Activated CD8-positive, alpha-beta T cell treated with anti-CD3 and anti-CD28 coated beads for 36 hours (primary cell): ENCODE measurements at regions of chr6 and their contacts with region 1.

Region 1: DNA sequence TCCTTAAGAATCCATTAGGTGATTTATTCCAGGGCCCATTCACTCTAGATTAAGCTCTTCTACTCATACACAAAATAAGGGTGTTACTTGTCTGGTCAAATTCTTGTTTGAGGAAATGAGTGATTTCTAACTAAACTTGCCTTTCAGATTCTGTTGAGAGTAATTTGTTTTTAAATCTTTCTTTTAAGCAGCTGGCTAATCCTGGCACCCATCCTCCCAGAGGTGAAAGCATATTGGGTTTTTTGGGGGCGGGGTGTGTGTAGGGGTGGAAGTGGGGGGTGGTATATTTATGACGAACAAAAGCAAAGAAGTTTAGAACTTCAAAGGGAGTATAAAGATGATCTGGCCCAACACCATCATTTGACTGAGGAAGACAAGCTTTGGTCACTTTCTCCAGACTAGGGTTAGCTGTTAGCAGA is 94.7 kb downstream of the RTN4IP1 start:
- DNase-seq: peak; percentile 77
- ATAC-seq: peak; percentile 84
- H3K4me3 Mint-ChIP-seq: no peak overlapping the region
- H3K27ac Mint-ChIP-seq: peak overlapping the region; percentile 84
- H3K4me1 Mint-ChIP-seq: peaks cover 78% of the 10 kb centered on the region
- H3K27me3 Mint-ChIP-seq: no peaks in the 10 kb centered on the region
- CTCF ChIP-seq: no peak

Region 2: DNA sequence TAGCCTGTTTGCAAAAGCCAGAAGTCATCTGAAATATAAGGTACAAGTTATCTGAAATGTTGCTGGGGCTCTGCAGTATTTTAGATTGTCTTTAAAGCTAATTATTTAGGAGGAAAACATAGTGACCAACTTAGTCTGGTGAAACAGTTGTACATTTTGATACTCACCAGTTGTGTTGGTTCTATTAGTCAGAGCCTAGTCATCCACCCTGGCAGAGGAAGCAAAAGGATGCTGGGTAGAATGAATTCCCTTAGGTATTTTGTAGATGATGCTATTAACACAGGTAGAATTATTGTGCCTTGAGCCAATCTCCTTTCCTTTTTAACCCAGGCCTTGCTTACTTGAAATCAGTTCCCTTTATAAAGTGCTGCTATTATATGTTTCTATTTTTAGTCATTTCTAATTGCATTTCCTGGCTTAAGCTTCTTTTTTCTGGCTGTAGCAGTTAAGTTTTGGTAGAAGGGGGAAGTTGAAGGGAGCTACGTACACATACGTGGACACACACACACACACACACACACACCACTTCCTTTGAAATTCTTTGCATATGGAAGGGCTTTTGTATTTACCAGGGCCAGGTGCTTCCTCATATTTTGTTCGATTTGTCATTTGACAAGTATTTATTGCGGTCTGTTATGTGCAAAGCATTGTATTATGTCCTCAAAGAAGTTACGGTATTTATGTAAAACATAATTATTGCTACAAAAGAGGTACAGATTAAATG is 12.3 kb after region 1 on chr6:
- CTCF ChIA-PET with region 1: interaction called, 4 read pairs
- POLR2A ChIA-PET with region 1: interaction called, 10 read pairs
- intact Hi-C with region 1: no loop called
- DNase-seq: no peak
- ATAC-seq: peak; percentile 81
- H3K4me3 Mint-ChIP-seq: no peak overlapping the region
- H3K27ac Mint-ChIP-seq: peak overlapping the region; percentile 79
- H3K4me1 Mint-ChIP-seq: peaks cover 32% of the 10 kb centered on the region
- H3K27me3 Mint-ChIP-seq: no peaks in the 10 kb centered on the region
- CTCF ChIP-seq: no peak

Region 3: DNA sequence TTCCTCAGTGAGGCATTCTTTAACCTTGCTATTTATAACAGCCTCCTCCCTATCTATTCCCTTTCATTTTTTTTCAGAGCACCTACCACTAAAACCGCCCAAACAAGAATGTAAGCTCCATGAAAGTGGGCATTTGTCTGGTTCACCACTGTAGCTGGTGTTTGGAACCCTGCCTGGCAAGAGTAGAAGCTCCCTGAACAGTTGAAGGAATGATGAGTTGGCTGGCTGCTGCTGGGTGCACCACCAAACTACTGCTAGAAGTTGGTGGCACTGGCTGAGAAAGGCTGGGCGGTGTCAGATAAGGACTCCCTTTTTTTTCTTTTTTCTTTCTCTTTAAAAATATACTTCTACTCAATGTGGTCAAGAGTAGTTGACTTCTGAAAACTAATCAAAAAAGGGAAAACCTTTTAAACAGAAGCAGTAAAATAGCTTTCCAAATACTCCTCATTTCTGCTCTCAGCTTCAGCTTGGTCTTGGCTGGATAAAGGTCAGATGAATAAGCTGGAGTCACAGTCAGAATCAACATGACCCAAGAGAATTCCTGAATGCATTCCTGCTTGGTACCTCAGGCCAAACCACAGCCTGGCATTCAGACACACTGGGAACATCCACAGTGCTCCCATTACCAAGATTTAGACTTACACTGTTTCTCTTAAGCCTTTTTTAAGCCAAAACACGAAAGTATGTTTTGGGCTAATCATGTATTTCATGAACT is 56.7 kb after region 1 on chr6:
- CTCF ChIA-PET with region 1: no interaction called
- POLR2A ChIA-PET with region 1: no interaction called
- intact Hi-C with region 1: no loop called
- DNase-seq: no peak
- ATAC-seq: no peak
- H3K4me3 Mint-ChIP-seq: no peak overlapping the region
- H3K27ac Mint-ChIP-seq: no peak overlapping the region
- H3K4me1 Mint-ChIP-seq: no peaks in the 10 kb centered on the region
- H3K27me3 Mint-ChIP-seq: no peaks in the 10 kb centered on the region
- CTCF ChIP-seq: no peak